ENCODE measurements at regions of chr10 and their contacts with region 1.

Region 1: DNA sequence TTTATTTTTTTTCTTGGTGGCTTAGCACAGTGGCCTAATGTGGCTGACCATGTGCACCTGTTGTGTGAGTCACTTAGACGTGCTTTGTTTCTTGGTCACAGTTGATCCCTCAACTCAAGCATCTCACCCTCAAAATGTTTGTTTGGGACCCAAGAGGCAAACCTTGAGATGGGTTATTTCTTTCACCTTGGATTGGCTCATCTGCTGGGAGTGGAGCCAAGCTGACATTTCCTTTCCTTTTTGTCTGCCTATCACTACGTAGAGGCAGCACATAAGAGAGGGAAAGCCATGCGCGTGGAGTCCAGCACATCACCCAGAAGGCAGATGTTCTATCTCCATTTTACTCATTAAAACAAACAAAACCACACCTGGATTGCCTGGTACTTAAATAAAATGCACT is 6.4 kb upstream of the PRKCQ start:
- DNase-seq: peak in 5 of 14 experiments; percentile 25 to 54 (median 44)
- ATAC-seq: peak; percentile 25
- H3K4me3 ChIP-seq: peak overlapping the region; percentile 87
- H3K4me3 Mint-ChIP-seq: peak overlapping the region; percentile 94
- H3K27ac ChIP-seq: peak overlapping the region; percentile 42 to 50
- H3K27ac Mint-ChIP-seq: peak overlapping the region; percentile 94
- H3K4me1 ChIP-seq: peaks cover 63% of the 10 kb centered on the region
- H3K4me1 Mint-ChIP-seq: peaks cover 98% of the 10 kb centered on the region
- H3K27me3 ChIP-seq: no peaks in the 10 kb centered on the region
- H3K27me3 Mint-ChIP-seq: no peaks in the 10 kb centered on the region
- CTCF ChIP-seq: no peak

Region 2: GRCh38 chr10:6601246-6601805 is 14.8 kb after region 1 on chr10:
- CTCF ChIA-PET with region 1: interaction called, 55 read pairs
- POLR2A ChIA-PET with region 1: interaction called, 104 read pairs
- intact Hi-C with region 1: loop called in 1 of 2 experiments (anchors 2 kb)
- DNase-seq: peak in 8 of 14 experiments; percentile 36 to 60 (median 54)
- ATAC-seq: peak; percentile 67
- H3K4me3 ChIP-seq: no peak overlapping the region
- H3K4me3 Mint-ChIP-seq: peak overlapping the region; percentile 71
- H3K27ac ChIP-seq: no peak overlapping the region
- H3K27ac Mint-ChIP-seq: peak overlapping the region; percentile 83
- H3K4me1 ChIP-seq: peaks cover 35% of the 10 kb centered on the region
- H3K4me1 Mint-ChIP-seq: peaks cover 80% of the 10 kb centered on the region
- H3K27me3 ChIP-seq: no peaks in the 10 kb centered on the region
- H3K27me3 Mint-ChIP-seq: no peaks in the 10 kb centered on the region
- CTCF ChIP-seq: peak; percentile 79

Region 3: DNA sequence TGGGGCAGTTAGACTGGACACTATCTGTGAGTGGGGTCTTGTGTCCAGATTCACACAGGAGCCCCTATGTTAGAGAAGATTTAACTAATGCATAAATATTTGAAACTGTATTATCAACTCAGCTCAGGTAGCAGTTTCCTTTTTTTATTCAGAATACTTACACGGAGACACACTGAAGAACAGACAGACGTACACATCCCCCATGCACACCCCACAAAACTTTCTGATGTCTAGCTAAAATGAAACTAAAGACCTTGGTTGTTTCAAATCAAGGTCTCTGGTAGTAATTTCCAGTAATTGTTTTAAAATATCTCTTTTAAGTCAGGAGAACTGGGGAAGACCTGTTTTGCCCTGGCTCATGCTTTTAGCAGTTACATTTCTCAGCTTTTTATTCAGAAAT is 49.3 kb after region 1 on chr10:
- CTCF ChIA-PET with region 1: no interaction called
- POLR2A ChIA-PET with region 1: no interaction called
- intact Hi-C with region 1: no loop called
- DNase-seq: no peak
- ATAC-seq: no peak
- H3K4me3 ChIP-seq: no peak overlapping the region
- H3K4me3 Mint-ChIP-seq: no peak overlapping the region
- H3K27ac ChIP-seq: no peak overlapping the region
- H3K27ac Mint-ChIP-seq: peak overlapping the region; percentile 27
- H3K4me1 ChIP-seq: no peaks in the 10 kb centered on the region
- H3K4me1 Mint-ChIP-seq: peaks cover 21% of the 10 kb centered on the region
- H3K27me3 ChIP-seq: no peaks in the 10 kb centered on the region
- H3K27me3 Mint-ChIP-seq: no peaks in the 10 kb centered on the region
- CTCF ChIP-seq: no peak

Region 4: DNA sequence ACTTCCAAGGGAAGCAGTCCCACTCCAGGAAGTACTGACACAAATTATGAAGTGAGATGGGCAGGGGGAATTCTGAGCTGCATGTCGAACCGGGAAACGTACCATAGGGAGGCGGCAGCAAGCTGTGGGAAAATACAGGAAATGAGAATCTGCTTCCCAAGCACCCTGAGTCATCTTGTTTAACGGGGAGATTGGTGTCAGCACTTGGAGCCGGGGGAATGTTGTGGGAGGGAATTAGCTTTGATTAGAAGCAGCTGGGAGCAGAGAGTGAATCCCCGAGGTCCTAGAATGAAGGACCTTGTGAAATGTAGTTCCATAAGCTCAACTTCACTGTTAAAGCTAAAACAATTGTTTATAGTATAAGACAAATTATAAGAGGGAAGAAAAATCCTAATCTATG is 135.0 kb after region 1 on chr10:
- CTCF ChIA-PET with region 1: no interaction called
- POLR2A ChIA-PET with region 1: no interaction called
- intact Hi-C with region 1: no loop called
- DNase-seq: no peak
- ATAC-seq: no peak
- H3K4me3 ChIP-seq: no peak overlapping the region
- H3K4me3 Mint-ChIP-seq: no peak overlapping the region
- H3K27ac ChIP-seq: no peak overlapping the region
- H3K27ac Mint-ChIP-seq: no peak overlapping the region
- H3K4me1 ChIP-seq: no peaks in the 10 kb centered on the region
- H3K4me1 Mint-ChIP-seq: no peaks in the 10 kb centered on the region
- H3K27me3 ChIP-seq: peaks cover 16 to 31% of the 10 kb centered on the region in 2 experiments
- H3K27me3 Mint-ChIP-seq: peaks cover 85% of the 10 kb centered on the region
- CTCF ChIP-seq: no peak